ENCODE measurements at regions of chr17 and their contacts with region 1.

Region 1: DNA sequence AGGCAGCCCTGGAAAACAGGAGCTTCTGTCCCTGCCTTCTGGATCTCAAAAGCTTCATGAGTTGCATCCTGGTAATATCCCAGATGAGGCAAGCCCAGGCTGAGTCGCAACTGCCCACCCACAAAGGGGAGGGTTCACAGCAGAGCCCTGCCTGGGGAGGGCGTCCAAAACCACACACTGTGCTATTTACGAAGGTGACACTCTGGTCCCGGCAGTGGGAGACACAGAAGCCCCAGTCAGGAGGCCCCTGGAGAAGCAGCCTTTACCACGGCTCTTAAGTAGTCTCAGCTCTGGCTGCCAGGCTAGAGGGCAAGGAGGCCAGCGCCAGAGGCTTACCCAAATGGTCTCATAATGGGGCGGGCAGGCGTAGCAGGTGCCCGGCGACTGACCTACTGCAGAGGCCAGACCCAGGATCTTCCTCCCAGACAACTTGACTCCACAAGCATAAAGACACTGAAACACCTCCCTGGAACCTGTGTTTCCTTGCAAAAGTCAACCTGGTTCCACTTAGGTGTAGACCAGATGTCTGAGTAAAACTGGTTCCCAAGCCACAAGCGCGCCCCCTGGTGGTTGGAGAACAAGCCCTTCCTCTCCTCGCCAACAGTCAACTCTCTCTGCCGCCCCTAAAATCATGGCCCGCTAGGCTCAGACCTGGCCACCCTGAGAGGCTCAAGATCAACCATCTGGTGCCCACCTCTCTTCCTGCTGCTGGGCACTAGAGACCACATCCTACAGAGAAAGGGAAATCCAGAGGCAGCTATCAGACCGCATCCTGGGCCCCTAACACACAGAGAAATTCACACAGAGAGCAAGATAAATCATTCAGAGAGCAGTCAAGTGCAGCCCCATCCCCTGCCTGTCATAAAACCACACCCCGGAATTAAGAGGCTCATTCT is 5.2 kb downstream of the AXIN2 start:
- DNase-seq: peak; percentile 94
- H3K4me3 ChIP-seq: peak overlapping the region in 3 of 4 donors; percentile 1 to 92 (median 10)
- H3K27ac ChIP-seq: no peak overlapping the region
- H3K4me1 ChIP-seq: peaks cover 4 to 45% (median 22%) of the 10 kb centered on the region in 4 donors
- H3K27me3 ChIP-seq: no peaks in the 10 kb centered on the region
- CTCF ChIP-seq: peak; percentile 81 to 95 (median 90)
- EP300 ChIP-seq: no peak
- POLR2A ChIP-seq: no peak

Region 2: DNA sequence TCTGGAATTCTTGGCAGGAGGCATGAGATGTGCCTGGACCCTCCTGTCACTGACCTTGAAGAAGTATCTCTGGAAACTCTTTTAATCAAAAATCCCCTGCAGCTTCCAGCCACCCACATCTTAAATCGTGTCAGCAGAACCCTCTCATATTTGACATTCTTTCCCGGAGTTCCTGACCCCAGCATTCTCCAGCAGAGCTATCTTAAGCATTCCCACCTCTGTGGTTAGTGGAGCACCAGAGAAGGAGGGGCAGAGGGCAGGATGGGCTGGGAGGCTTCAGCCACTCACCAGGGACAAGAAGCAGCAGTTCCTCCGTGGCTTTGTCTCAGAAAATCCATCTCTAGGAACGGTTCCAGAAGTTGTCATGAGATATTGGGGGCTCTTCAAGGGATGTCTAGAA is 269.2 kb before region 1 on chr17:
- in situ Hi-C with region 1: loop called (anchors 10 to 25 kb)
- intact Hi-C with region 1: no loop called
- DNase-seq: no peak
- H3K4me3 ChIP-seq: no peak overlapping the region
- H3K27ac ChIP-seq: no peak overlapping the region
- H3K4me1 ChIP-seq: peaks cover 0 to 41% (median 13%) of the 10 kb centered on the region in 4 donors
- H3K27me3 ChIP-seq: no peaks in the 10 kb centered on the region
- CTCF ChIP-seq: no peak
- EP300 ChIP-seq: no peak
- POLR2A ChIP-seq: no peak

Region 3: DNA sequence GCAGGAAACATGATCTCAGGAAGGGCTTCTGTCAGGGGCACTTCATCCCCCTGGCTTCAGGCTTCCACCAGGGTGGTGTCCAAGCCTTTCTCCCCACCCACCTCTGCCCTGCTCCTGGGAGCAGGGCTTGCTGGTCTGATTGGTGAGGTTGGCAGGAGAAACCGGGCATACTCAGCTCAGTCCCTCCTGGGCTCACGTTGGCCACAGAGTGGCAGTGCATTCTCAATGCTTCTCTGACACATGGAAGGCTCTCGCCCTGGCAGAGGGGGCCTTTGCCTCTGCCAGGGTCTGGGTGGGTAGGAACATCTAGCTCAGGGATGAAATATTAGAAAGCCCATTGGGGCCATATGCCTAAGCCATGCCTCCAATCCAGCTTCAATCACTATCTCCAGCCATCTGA is 137.6 kb before region 1 on chr17:
- in situ Hi-C with region 1: loop called in 1 of 4 experiments (anchors 10 kb)
- intact Hi-C with region 1: no loop called
- DNase-seq: peak; percentile 22
- H3K4me3 ChIP-seq: no peak overlapping the region
- H3K27ac ChIP-seq: no peak overlapping the region
- H3K4me1 ChIP-seq: peaks cover 0 to 8% (median 2%) of the 10 kb centered on the region in 4 donors
- H3K27me3 ChIP-seq: no peaks in the 10 kb centered on the region
- CTCF ChIP-seq: peak in 2 of 5 experiments; percentile 10 to 20
- EP300 ChIP-seq: no peak
- POLR2A ChIP-seq: no peak

Region 4: DNA sequence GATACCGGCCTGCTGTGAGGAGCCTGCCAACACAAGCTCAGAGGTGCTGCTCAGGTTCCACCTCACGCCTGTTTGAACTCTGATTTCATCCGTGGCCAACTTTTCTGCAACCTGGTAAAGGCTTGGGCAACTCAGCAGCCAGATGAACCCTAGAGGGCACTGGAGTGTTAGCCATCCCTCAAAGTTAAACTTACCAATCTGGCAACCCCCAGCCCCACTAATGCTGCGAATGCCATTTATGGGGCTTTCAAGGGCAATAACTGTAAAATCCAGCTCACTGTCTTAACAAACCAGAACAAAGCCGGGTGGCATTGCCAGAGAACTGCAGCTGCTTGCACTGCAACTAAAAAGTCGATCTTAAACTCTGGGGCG is 100.3 kb before region 1 on chr17:
- in situ Hi-C with region 1: no loop called
- intact Hi-C with region 1: no loop called
- DNase-seq: peak; percentile 35
- H3K4me3 ChIP-seq: no peak overlapping the region
- H3K27ac ChIP-seq: no peak overlapping the region
- H3K4me1 ChIP-seq: peaks cover 6 to 22% (median 8%) of the 10 kb centered on the region in 4 donors
- H3K27me3 ChIP-seq: no peaks in the 10 kb centered on the region
- CTCF ChIP-seq: peak in 4 of 5 experiments; percentile 23 to 27 (median 25)
- EP300 ChIP-seq: no peak
- POLR2A ChIP-seq: no peak

Measured in transverse colon (tissue), 4 donors.